Mucosa of descending colon (tissue), 3 donors: ENCODE measurements at regions of chr9 and their contacts with region 1.

Region 1: GRCh38 chr9:74479711-74480110 is 17.4 kb upstream of the RORB start:
- DNase-seq: no peak
- ATAC-seq: no peak
- H3K4me3 ChIP-seq: no peak overlapping the region
- H3K4me1 ChIP-seq: no peaks in the 10 kb centered on the region
- CTCF ChIP-seq: no peak

Region 2: DNA sequence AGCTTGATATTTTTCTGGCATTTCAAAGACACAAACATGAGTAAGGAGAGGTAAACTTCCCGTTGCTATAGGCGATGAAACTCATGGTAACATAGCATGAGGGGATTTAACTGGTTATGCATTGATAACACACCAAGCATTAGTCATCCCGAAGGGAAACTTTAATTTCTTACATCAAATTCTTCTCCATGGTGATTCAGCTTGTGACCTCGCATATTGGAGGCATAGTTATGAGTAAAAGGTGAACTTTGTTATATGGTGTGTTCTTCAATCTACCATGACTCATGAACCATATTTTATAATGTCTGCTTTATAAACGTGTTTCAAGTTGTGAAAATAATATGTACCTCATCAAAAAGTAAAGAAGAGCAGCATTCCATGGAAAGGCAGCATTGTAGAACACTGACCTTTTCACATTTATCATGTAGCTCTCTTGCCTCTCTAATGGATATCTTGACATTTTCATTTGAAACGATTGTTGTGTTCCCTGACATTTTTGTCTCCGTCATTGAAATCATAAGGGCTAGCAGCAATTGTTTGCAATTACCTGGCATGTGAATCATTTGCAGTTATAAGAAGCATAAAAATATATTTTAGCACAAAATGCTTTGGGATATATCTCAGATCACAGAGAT is 836.2 kb before region 1 on chr9:
- intact Hi-C with region 1: loop called in 1 of 2 experiments (anchors 10 kb)
- DNase-seq: no peak
- ATAC-seq: no peak
- H3K4me3 ChIP-seq: no peak overlapping the region
- H3K4me1 ChIP-seq: no peaks in the 10 kb centered on the region
- CTCF ChIP-seq: no peak

Region 3: DNA sequence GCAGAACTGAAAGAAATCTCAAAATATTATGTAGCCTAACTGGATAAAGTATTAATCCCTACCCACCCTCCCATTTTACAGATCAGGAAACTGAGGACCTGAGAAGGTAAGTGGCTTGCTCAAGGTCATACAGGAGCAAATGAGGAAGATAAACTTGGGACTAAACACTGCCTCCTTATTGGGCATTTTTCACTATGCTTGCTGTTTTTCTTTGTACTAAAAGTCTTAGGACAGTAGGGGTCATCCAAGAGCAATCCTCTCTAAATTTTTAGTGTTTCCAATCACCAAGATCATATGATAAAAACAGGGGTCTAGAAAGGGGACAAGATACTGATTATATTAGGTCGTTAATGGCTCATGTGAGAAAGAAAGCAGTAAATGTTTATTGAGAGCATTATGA is 98.2 kb after region 1 on chr9:
- intact Hi-C with region 1: no loop called
- DNase-seq: no peak
- ATAC-seq: no peak
- H3K4me3 ChIP-seq: no peak overlapping the region
- H3K4me1 ChIP-seq: no peaks in the 10 kb centered on the region
- CTCF ChIP-seq: no peak